GM23248 (cell line): ENCODE measurements at regions of chr5 and their contacts with region 1.

Region 1: GRCh38 chr5:112210430-112211005 is 208.6 kb downstream of the EPB41L4A start:
- DNase-seq: peak; percentile 59
- H3K4me3 ChIP-seq: no peak overlapping the region
- H3K27ac ChIP-seq: no peak overlapping the region
- H3K4me1 ChIP-seq: no peaks in the 10 kb centered on the region
- H3K27me3 ChIP-seq: no peaks in the 10 kb centered on the region

Region 2: GRCh38 chr5:111582993-111583601 is 627.4 kb before region 1 on chr5:
- in situ Hi-C with region 1: no loop called
- DNase-seq: peak; percentile 92
- H3K4me3 ChIP-seq: peak overlapping the region; percentile 25; the same call in 1 of the 2 replicates
- H3K27ac ChIP-seq: peak overlapping the region; percentile 83
- H3K4me1 ChIP-seq: peaks cover 48% of the 10 kb centered on the region
- H3K27me3 ChIP-seq: no peaks in the 10 kb centered on the region

Region 3: GRCh38 chr5:112757468-112758208 is 547.1 kb after region 1 on chr5:
- in situ Hi-C with region 1: loop called (anchors 25 kb)
- DNase-seq: peak; percentile 73
- H3K4me3 ChIP-seq: no peak overlapping the region
- H3K27ac ChIP-seq: no peak overlapping the region
- H3K4me1 ChIP-seq: peaks cover 15% of the 10 kb centered on the region
- H3K27me3 ChIP-seq: no peaks in the 10 kb centered on the region